ENCODE measurements at regions of chr4 and their contacts with region 1.

Region 1: DNA sequence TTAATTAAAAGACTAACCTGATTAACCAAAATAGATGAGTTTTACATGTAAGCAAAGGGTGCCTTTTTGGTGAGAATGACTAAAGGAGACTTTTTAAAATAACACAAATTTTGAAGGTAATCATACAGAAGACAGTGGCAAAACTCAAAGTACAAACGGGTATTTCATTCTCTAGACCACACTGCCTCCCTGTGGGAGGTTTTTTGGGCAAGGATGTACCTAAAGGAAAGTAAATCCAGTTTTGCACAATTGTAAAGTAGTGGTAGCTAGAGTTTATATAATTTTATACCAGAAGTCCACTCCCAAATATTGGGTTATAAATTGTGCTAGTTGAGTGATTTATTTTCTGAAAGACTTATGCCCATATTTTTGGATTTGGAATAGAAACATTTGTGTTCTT is 201.0 kb downstream of the PAPSS1 start:
- ATAC-seq: peak in 3 of 8 experiments; percentile 27 to 48 (median 40)
- H3K4me3 ChIP-seq: no peak overlapping the region
- H3K27ac ChIP-seq: no peak overlapping the region
- H3K4me1 ChIP-seq: no peaks in the 10 kb centered on the region

Region 2: DNA sequence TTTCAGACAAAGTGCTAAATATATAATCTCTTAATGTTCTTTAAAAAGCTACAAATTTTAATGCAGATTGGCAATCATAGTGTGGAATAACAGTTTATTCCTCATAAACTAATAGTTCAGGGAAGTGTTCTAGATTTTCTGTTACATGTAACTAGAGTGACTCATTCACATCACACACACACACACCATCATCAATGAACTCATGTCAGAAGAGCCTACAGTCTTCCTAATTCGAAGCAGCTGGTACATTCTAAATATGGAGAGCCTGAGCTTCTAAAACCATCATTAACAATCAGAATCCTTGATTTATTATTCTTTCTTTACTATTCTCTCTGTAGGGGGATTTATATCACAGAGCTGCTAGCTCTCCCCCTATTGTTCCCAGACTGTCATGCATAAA is 532.6 kb before region 1 on chr4:
- in situ Hi-C with region 1: no loop called
- ATAC-seq: peak; percentile 73 to 99 (median 93)
- H3K4me3 ChIP-seq: no peak overlapping the region
- H3K27ac ChIP-seq: no peak overlapping the region
- H3K4me1 ChIP-seq: peaks cover 6 to 9% of the 10 kb centered on the region in 2 donors

Region 3: GRCh38 chr4:107094332-107094731 is 424.7 kb before region 1 on chr4:
- in situ Hi-C with region 1: loop called in 1 of 9 experiments (anchors 25 kb)
- ATAC-seq: peak in 3 of 8 experiments; percentile 63 to 92 (median 91)
- H3K4me3 ChIP-seq: no peak overlapping the region
- H3K27ac ChIP-seq: no peak overlapping the region
- H3K4me1 ChIP-seq: no peaks in the 10 kb centered on the region

Region 4: GRCh38 chr4:107183155-107183774 is 335.8 kb before region 1 on chr4:
- in situ Hi-C with region 1: loop called in 1 of 9 experiments (anchors 25 kb)
- ATAC-seq: peak; percentile 64 to 96 (median 80)
- H3K4me3 ChIP-seq: no peak overlapping the region
- H3K27ac ChIP-seq: no peak overlapping the region
- H3K4me1 ChIP-seq: no peaks in the 10 kb centered on the region